ENCODE measurements at regions of chr11 and their contacts with region 1.

Region 1: GRCh38 chr11:83241291-83241946 is 44.7 kb downstream of the CCDC90B start:
- DNase-seq: peak; percentile 59
- H3K4me3 ChIP-seq: no peak overlapping the region
- H3K27ac ChIP-seq: no peak overlapping the region
- H3K4me1 ChIP-seq: no peaks in the 10 kb centered on the region
- H3K27me3 ChIP-seq: no peaks in the 10 kb centered on the region
- CTCF ChIP-seq: peak; percentile 65 to 74

Region 2: GRCh38 chr11:82718307-82718706 is 523.1 kb before region 1 on chr11:
- CTCF ChIA-PET with region 1: no interaction called
- dilution Hi-C with region 1: no loop called
- in situ Hi-C with region 1: no loop called
- intact Hi-C with region 1: loop called (anchors 5 kb)
- DNase-seq: peak; percentile 54
- H3K4me3 ChIP-seq: no peak overlapping the region
- H3K27ac ChIP-seq: no peak overlapping the region
- H3K4me1 ChIP-seq: peaks cover 4% of the 10 kb centered on the region
- H3K27me3 ChIP-seq: no peaks in the 10 kb centered on the region
- CTCF ChIP-seq: peak; percentile 76 to 80

Region 3: DNA sequence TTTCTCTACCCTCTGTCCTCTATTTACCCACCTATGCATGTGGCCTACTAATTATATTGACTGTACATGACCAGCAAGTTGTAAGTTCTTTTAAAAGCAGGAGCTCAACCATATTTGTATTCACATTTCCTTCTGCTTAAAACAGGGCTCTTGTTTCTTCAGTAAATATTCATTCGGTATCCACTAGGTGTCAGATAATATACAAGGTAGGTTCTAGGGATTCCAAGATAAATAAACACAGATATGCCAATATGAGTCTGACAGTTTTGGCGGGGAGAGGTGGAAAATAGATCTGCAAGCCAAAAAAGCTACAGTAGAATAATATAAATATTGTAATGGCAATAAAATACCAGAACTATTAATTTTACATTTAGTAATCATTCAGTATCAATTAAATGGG is 154.4 kb before region 1 on chr11:
- CTCF ChIA-PET with region 1: no interaction called
- dilution Hi-C with region 1: no loop called
- in situ Hi-C with region 1: no loop called
- intact Hi-C with region 1: loop called (anchors 10 kb)
- DNase-seq: no peak
- H3K4me3 ChIP-seq: no peak overlapping the region
- H3K27ac ChIP-seq: no peak overlapping the region
- H3K4me1 ChIP-seq: no peaks in the 10 kb centered on the region
- H3K27me3 ChIP-seq: no peaks in the 10 kb centered on the region
- CTCF ChIP-seq: peak in 1 of 2 donors; percentile 38